Left lung (tissue), 14 donors: ENCODE measurements at regions of chr14 and their contacts with region 1.

Region 1: DNA sequence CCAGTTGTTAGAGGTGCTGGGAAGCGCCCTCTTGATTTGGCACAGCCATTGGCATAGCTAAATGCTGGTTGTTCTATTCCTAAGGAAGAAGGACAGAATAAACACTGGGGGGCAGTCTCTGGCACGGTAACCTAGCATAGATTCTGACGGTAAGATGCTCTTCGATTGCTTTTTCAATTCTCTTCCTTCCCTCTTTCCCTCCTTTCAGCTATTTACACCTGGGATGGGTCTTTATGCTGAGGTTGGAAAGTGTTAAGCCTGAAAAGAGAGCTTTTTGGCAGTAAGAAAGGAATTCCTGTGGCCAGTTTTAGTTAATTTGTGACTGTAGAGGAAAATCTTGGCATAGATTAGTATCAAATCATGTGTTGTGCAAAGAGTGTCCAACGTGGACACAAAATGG is 162.8 kb downstream of the SNAPC1 start:
- DNase-seq: no peak
- ATAC-seq: peak; percentile 48
- H3K4me3 ChIP-seq: no peak overlapping the region
- H3K27ac ChIP-seq: no peak overlapping the region
- H3K4me1 ChIP-seq: no peaks in the 10 kb centered on the region
- H3K27me3 ChIP-seq: no peaks in the 10 kb centered on the region
- CTCF ChIP-seq: no peak

Region 2: GRCh38 chr14:61750708-61751474 is 174.2 kb before region 1 on chr14:
- intact Hi-C with region 1: no loop called
- DNase-seq: peak; percentile 77 to 98 (median 90)
- ATAC-seq: peak; percentile 93
- H3K4me3 ChIP-seq: peak overlapping the region; percentile 36 to 42
- H3K27ac ChIP-seq: peak overlapping the region; percentile 87 to 90
- H3K4me1 ChIP-seq: peaks cover 12 to 54% of the 10 kb centered on the region in 2 donors
- H3K27me3 ChIP-seq: no peaks in the 10 kb centered on the region
- CTCF ChIP-seq: no peak

Region 3: DNA sequence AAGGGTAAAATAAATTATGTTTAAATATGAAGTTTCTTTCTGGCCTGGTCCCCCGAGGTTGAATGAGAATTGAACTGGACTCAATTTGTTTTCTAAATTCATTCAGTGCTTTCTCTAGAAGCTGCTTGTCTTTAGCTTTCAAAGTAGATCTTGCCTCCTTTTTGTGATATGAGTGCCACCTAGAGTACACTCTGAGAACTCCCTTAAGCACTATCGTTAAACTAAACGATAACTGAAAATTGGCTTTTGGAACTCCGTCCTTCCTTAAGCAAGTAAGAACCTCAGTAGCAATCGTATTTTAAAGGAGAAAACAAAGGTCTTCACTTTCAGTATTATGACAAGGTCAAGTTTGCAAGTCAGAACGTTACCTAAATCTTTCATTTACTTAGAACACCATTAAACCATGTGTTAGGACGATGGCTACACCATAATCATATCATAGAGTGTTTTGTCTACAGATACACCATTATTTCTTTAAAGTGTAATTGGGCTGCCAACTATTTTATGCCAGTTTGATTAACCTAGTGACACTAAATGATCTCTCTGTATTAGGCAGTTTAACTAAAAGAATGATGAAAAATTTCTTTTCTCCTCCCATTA is 201.9 kb after region 1 on chr14:
- intact Hi-C with region 1: loop called in 1 of 2 experiments (anchors 10 kb)
- DNase-seq: peak in 1 of 4 donors; percentile 67
- ATAC-seq: peak; percentile 89
- H3K4me3 ChIP-seq: no peak overlapping the region
- H3K27ac ChIP-seq: no peak overlapping the region
- H3K4me1 ChIP-seq: no peaks in the 10 kb centered on the region
- H3K27me3 ChIP-seq: peaks cover 0 to 23% of the 10 kb centered on the region in 2 donors
- CTCF ChIP-seq: peak; percentile 58 to 73